B cell (primary cell): ENCODE measurements at regions of chr19 and their contacts with region 1.

Region 1: GRCh38 chr19:37466798-37467607 is at the start of gene ZNF569:
- DNase-seq: peak; percentile 95
- ATAC-seq: peak; percentile 69
- H3K4me3 ChIP-seq: peak within 1 kb of the TSS; percentile 80 to 98 (median 86)
- H3K4me3 Mint-ChIP-seq: peak within 1 kb of the TSS; percentile 99
- H3K27ac ChIP-seq: peak within 1 kb of the TSS; percentile 77
- H3K27ac Mint-ChIP-seq: peak within 1 kb of the TSS; percentile 98
- H3K4me1 ChIP-seq: peaks cover 14 to 32% of the 10 kb centered on the region in 2 donors
- H3K4me1 Mint-ChIP-seq: peaks cover 32% of the 10 kb centered on the region
- H3K27me3 ChIP-seq: no peaks in the 10 kb centered on the region
- H3K27me3 Mint-ChIP-seq: no peaks in the 10 kb centered on the region
- CTCF ChIP-seq: no peak
- total RNA-seq, gene ZNF569: 11.1 and 13.9 TPM in 2 replicates

Region 2: GRCh38 chr19:36378625-36379509 is 1088.1 kb before region 1 on chr19 and contains the start of gene ZFP14:
- CTCF ChIA-PET with region 1: no interaction called
- POLR2A ChIA-PET with region 1: interaction called, 11 read pairs
- intact Hi-C with region 1: loop called (anchors 5 kb)
- DNase-seq: peak; percentile 97
- ATAC-seq: peak; percentile 98
- H3K4me3 ChIP-seq: peak within 1 kb of the TSS; percentile 79 to 95 (median 85)
- H3K4me3 Mint-ChIP-seq: peak within 1 kb of the TSS; percentile 82
- H3K27ac ChIP-seq: peak within 1 kb of the TSS; percentile 83 to 94
- H3K27ac Mint-ChIP-seq: peak within 1 kb of the TSS; percentile 97
- H3K4me1 ChIP-seq: peaks cover 13 to 19% of the 10 kb centered on the region in 2 donors
- H3K4me1 Mint-ChIP-seq: peaks cover 19% of the 10 kb centered on the region
- H3K27me3 ChIP-seq: no peaks in the 10 kb centered on the region
- H3K27me3 Mint-ChIP-seq: no peaks in the 10 kb centered on the region
- CTCF ChIP-seq: peak; percentile 66
- total RNA-seq, gene ZFP14: 22.4 and 22.7 TPM in 2 replicates

Region 3: GRCh38 chr19:36915992-36916830 is 550.8 kb before region 1 on chr19 and contains the starts of genes ZNF568 and ZNF829:
- CTCF ChIA-PET with region 1: no interaction called
- POLR2A ChIA-PET with region 1: no interaction called
- intact Hi-C with region 1: loop called (anchors 5 kb)
- DNase-seq: peak; percentile 96
- ATAC-seq: peak; percentile 89
- H3K4me3 ChIP-seq: peak within 1 kb of the TSS; percentile 77 to 90 (median 86)
- H3K4me3 Mint-ChIP-seq: peak within 1 kb of the TSS; percentile 96
- H3K27ac ChIP-seq: peak within 1 kb of the TSS; percentile 86 to 95
- H3K27ac Mint-ChIP-seq: peak within 1 kb of the TSS; percentile 95
- H3K4me1 ChIP-seq: peaks cover 11 to 12% of the 10 kb centered on the region in 2 donors
- H3K4me1 Mint-ChIP-seq: peaks cover 24% of the 10 kb centered on the region
- H3K27me3 ChIP-seq: no peaks in the 10 kb centered on the region
- H3K27me3 Mint-ChIP-seq: no peaks in the 10 kb centered on the region
- CTCF ChIP-seq: peak; percentile 81
- total RNA-seq, gene ZNF568: 19.4 and 21.1 TPM in 2 replicates
- total RNA-seq, gene ZNF829: 8.4 and 9.6 TPM in 2 replicates

Region 4: DNA sequence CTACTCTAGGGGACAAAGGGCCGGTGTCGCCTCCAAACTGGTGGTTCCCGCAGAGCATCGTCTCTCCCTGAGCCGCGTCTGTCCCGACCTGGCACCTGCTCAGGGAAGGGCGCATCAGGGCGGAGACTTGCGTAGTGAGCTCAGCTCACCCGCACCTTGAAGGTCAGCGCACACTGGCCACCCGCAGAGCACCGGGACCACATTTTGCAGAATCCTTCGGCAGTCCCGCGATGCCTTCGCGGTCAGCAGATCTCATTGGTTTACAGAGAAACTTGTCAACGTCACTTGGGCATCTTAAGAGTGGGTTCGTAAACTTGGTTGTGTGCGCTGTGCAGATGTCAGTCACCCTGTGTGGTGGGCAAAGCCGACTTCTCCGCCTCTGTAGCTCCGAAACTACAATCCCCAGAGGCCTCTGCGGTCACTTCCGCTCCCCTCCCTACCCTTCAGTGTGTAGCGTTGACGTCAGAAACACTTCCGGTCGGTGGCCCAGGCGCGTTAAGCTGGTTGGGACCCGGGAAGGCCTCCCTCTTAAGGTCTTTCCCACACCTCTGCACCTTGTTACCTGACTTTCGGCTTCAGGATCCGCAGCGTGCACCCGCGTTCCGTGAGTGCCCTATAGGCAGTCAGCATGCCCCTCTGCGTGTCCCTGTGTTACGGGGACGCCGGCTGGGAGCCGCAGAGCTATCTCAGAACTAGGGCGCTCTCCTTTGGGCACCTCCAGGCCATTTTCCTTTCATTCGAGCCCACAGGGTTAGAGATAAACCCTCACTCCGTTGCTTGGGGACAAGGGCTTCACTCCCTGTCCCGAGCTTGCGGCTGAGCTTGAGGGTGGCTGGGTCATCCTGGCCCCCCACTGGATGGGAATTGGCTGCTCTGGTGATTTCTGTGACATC is 132.6 kb before region 1 on chr19:
- CTCF ChIA-PET with region 1: no interaction called
- POLR2A ChIA-PET with region 1: interaction called, 3 read pairs
- intact Hi-C with region 1: loop called (anchors 1 kb)
- DNase-seq: peak; percentile 92
- ATAC-seq: peak; percentile 95
- H3K4me3 ChIP-seq: peak overlapping the region; percentile 59 to 86 (median 83)
- H3K4me3 Mint-ChIP-seq: peak overlapping the region; percentile 92
- H3K27ac ChIP-seq: peak overlapping the region; percentile 62 to 85
- H3K27ac Mint-ChIP-seq: peak overlapping the region; percentile 83
- H3K4me1 ChIP-seq: peaks cover 11 to 16% of the 10 kb centered on the region in 2 donors
- H3K4me1 Mint-ChIP-seq: peaks cover 21% of the 10 kb centered on the region
- H3K27me3 ChIP-seq: no peaks in the 10 kb centered on the region
- H3K27me3 Mint-ChIP-seq: no peaks in the 10 kb centered on the region
- CTCF ChIP-seq: no peak

Region 5: DNA sequence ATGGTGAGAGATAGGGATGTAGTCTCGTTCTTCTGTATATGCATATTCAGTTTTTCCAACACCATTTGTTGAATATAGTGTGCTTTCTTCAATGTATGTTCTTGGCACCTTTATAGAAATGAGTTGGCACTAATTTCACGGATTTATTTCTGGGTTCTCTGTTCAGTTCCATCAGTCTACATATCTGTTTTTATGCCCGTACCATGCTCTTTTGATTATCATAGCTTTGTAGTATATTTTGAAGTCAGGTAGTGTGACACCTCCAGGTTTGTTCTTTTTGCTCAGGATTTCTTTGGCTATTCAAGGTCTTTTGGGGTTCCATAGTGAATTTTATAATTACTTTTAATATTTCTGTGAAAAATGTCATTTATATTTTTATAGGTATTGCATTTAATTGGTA is 25.2 kb after region 1 on chr19:
- CTCF ChIA-PET with region 1: no interaction called
- POLR2A ChIA-PET with region 1: no interaction called
- intact Hi-C with region 1: no loop called
- DNase-seq: no peak
- ATAC-seq: no peak
- H3K4me3 ChIP-seq: no peak overlapping the region
- H3K4me3 Mint-ChIP-seq: no peak overlapping the region
- H3K27ac ChIP-seq: no peak overlapping the region
- H3K27ac Mint-ChIP-seq: no peak overlapping the region
- H3K4me1 ChIP-seq: no peaks in the 10 kb centered on the region
- H3K4me1 Mint-ChIP-seq: no peaks in the 10 kb centered on the region
- H3K27me3 ChIP-seq: no peaks in the 10 kb centered on the region
- H3K27me3 Mint-ChIP-seq: no peaks in the 10 kb centered on the region
- CTCF ChIP-seq: no peak

Region 6: DNA sequence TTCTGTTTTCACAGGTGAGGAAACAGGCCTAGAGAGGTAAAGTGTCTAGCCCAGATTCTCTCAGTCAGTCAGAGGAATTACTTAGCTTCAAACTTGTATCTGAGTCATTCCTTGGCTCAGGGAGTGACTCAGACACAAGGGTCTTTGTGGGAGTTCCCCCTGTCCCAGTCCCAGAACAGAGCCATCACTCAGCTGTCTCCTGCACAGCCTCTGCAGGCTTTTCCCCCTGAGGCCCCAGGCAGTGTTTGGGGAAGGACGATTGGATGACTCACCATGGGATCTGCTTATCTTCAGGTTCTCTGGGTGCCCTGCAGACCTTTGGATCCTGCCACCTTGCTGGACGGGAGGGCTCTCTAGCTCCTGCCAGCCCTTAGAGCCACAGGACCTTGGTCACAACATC is 52.9 kb after region 1 on chr19:
- CTCF ChIA-PET with region 1: no interaction called
- POLR2A ChIA-PET with region 1: no interaction called
- intact Hi-C with region 1: no loop called
- DNase-seq: no peak
- ATAC-seq: no peak
- H3K4me3 ChIP-seq: no peak overlapping the region
- H3K4me3 Mint-ChIP-seq: no peak overlapping the region
- H3K27ac ChIP-seq: no peak overlapping the region
- H3K27ac Mint-ChIP-seq: no peak overlapping the region
- H3K4me1 ChIP-seq: no peaks in the 10 kb centered on the region
- H3K4me1 Mint-ChIP-seq: no peaks in the 10 kb centered on the region
- H3K27me3 ChIP-seq: no peaks in the 10 kb centered on the region
- H3K27me3 Mint-ChIP-seq: no peaks in the 10 kb centered on the region
- CTCF ChIP-seq: no peak

Region 7: DNA sequence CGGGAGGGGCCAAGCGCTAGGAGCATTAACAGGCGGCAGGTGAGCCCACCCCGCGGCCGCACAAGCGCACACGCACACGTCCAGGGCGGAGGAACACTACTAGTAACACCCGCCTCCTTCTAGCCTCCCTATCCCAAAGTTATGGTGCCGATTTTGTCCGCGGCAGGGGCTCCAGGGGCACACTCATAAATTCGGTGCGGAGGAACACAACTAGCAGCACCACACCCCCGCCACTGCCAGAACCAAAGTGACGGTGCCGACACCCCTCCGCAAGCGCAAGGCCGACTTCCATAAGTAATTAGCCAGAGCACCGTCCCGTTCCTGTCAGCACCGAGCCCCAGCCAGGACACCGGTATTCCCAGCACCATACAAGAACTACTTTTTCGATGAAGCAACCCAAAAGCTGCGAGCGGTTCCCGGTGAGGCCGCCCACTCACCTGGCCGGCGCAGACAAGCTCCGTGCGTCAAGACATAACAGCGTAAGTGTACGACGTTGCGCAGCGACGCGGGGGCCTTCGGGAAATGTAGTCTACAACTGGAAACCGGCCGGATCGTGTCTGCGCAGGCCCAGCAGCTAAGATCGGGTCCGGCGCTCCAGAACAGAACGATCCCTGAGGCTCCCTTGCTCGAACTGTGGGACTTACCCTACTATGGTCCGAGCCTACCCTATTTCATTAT is 127.4 kb after region 1 on chr19 and contains the starts of genes ZNF540 and ZNF571:
- CTCF ChIA-PET with region 1: interaction called, 3 read pairs
- POLR2A ChIA-PET with region 1: interaction called, 7 read pairs
- intact Hi-C with region 1: loop called (anchors 1 kb)
- DNase-seq: peak; percentile 95
- ATAC-seq: peak; percentile 96
- H3K4me3 ChIP-seq: peak within 1 kb of the TSS; percentile 67 to 88 (median 87)
- H3K4me3 Mint-ChIP-seq: peak within 1 kb of the TSS; percentile 99
- H3K27ac ChIP-seq: peak within 1 kb of the TSS; percentile 93 to 96
- H3K27ac Mint-ChIP-seq: peak within 1 kb of the TSS; percentile 99
- H3K4me1 ChIP-seq: peaks cover 11 to 14% of the 10 kb centered on the region in 2 donors
- H3K4me1 Mint-ChIP-seq: peaks cover 25% of the 10 kb centered on the region
- H3K27me3 ChIP-seq: no peaks in the 10 kb centered on the region
- H3K27me3 Mint-ChIP-seq: no peaks in the 10 kb centered on the region
- CTCF ChIP-seq: no peak
- total RNA-seq, gene ZNF540: 10.7 and 10.8 TPM in 2 replicates
- total RNA-seq, gene ZNF571: 10.0 and 13.1 TPM in 2 replicates